ENCODE measurements at regions of chr17 and their contacts with region 1.

Region 1: DNA sequence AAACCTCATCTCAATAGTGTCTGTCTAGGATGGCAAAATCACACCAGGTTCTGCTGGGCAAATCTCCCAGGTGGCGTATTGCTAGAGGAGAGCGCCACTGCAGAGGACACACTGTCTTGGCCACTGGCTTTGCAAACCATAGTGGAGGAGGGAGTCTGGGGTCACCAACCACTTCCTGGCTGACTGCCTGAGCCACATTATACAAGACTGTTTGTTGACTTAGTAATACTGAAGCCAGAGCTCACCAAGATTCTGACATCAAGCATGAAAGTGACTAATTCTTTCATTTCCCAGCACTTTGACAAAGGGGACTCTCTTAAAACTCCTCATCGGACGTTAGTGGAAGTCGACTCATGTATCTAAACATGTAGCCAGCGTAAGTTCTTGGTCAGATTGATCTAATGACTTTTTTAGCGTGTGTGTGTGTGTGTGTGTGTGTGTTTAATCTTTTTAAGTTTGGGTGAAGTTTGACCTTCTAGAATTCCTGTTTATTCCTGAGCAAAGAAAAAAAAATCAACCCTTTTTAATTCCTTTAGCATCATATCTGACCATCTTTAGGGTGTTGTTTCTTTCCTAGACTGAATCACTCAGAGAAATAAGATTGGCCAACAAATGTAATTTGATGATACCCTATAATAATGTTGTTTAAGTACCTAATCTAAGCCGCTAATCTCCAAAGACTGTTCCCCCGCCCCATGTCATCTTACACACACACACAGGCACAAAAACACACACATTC is 13.7 kb downstream of the PITPNC1 start:
- DNase-seq: peak; percentile 87
- ATAC-seq: peak; percentile 97
- H3K4me3 ChIP-seq: peak overlapping the region; percentile 24; the same call in 1 of the 2 replicates
- H3K27ac ChIP-seq: peak overlapping the region; percentile 80
- H3K4me1 ChIP-seq: peaks cover 36% of the 10 kb centered on the region
- H3K27me3 ChIP-seq: no peaks in the 10 kb centered on the region
- CTCF ChIP-seq: peak in 1 of 3 experiments; percentile 8; a peak in 1 of 6 replicates
- EP300 ChIP-seq: peak; percentile 78 to 85; a peak in 3 of 4 replicates
- POLR2A ChIP-seq: peak; percentile 41; the same call in 1 of the 2 replicates
- RAD21 ChIP-seq: peak; percentile 9; the same call in 1 of the 2 replicates

Region 2: GRCh38 chr17:67431249-67432048 is 40.6 kb after region 1 on chr17:
- CTCF ChIA-PET with region 1: interaction called, 4 read pairs
- POLR2A ChIA-PET with region 1: interaction called, 3 read pairs
- RAD21 ChIA-PET with region 1: no interaction called
- SMC1A ChIA-PET with region 1: interaction called, 4 read pairs
- in situ Hi-C with region 1: no loop called
- intact Hi-C with region 1: loop called (anchors 5 kb)
- DNase-seq: no peak
- ATAC-seq: peak; percentile 86
- H3K4me3 ChIP-seq: 0 out of 2 replicates have a peak overlapping the region, but pooled peaks have one; percentile 5
- H3K27ac ChIP-seq: peak overlapping the region; percentile 69
- H3K4me1 ChIP-seq: peaks cover 29% of the 10 kb centered on the region
- H3K27me3 ChIP-seq: no peaks in the 10 kb centered on the region
- CTCF ChIP-seq: no peak
- EP300 ChIP-seq: peak; percentile 77 to 80
- POLR2A ChIP-seq: no peak
- RAD21 ChIP-seq: no peak

Region 3: DNA sequence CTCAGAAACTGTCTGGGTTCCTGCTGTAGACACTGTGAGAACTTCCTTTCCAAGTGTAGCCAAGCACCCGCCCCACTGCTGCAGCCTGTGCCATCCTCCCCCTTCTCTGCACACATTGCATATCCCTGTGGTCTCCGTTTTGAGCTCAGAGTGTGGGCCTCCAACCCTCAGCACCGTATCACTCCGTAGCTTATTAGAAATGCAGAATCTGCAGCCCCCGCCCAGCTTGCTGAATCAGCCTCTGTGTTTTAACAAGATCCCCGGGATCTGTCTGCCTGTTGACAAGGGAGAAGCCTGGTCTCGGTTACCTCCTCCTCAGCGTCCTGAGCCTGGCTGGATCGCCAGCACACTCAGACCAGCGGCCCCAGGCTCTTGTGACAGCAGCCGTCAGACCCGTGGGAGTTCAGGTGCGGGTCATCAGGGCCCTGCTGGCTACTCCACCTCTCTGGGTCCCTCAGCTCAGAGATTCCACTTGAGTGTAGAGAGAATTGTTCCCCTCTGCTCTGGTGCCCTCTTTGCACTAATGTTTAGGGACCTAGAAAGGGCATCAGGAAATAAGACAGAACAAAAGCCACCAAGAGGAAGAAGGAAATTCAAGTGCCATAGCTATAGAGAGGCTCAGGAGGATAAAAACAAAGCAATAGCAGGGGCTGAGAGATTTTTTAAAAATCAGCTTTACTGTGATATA is 78.5 kb after region 1 on chr17:
- CTCF ChIA-PET with region 1: interaction called, 291 read pairs
- POLR2A ChIA-PET with region 1: interaction called, 4 read pairs
- RAD21 ChIA-PET with region 1: interaction called, 44 read pairs
- SMC1A ChIA-PET with region 1: interaction called, 48 read pairs
- in situ Hi-C with region 1: loop called (anchors 10 kb)
- intact Hi-C with region 1: no loop called
- DNase-seq: no peak
- ATAC-seq: no peak
- H3K4me3 ChIP-seq: no peak overlapping the region
- H3K27ac ChIP-seq: no peak overlapping the region
- H3K4me1 ChIP-seq: peaks cover 26% of the 10 kb centered on the region
- H3K27me3 ChIP-seq: no peaks in the 10 kb centered on the region
- CTCF ChIP-seq: no peak
- EP300 ChIP-seq: no peak
- POLR2A ChIP-seq: no peak
- RAD21 ChIP-seq: no peak

Measured in GM12878 (cell line).